HepG2 (cell line): ENCODE measurements at regions of chr1 and their contacts with region 1.

Region 1: GRCh38 chr1:235971571-235972310 is 93.1 kb downstream of the NID1 start:
- DNase-seq: peak; percentile 84
- ATAC-seq: peak; percentile 96
- H3K4me3 ChIP-seq: peak overlapping the region; percentile 46 to 78 (median 75)
- H3K27ac ChIP-seq: peak overlapping the region; percentile 42
- H3K4me1 ChIP-seq: peaks cover 7% of the 10 kb centered on the region
- H3K27me3 ChIP-seq: no peaks in the 10 kb centered on the region
- CTCF ChIP-seq: peak; percentile 94
- EP300 ChIP-seq: no peak
- POLR2A ChIP-seq: peak; percentile 41 to 53; a peak in 2 of 4 replicates
- RAD21 ChIP-seq: peak; percentile 79

Region 2: DNA sequence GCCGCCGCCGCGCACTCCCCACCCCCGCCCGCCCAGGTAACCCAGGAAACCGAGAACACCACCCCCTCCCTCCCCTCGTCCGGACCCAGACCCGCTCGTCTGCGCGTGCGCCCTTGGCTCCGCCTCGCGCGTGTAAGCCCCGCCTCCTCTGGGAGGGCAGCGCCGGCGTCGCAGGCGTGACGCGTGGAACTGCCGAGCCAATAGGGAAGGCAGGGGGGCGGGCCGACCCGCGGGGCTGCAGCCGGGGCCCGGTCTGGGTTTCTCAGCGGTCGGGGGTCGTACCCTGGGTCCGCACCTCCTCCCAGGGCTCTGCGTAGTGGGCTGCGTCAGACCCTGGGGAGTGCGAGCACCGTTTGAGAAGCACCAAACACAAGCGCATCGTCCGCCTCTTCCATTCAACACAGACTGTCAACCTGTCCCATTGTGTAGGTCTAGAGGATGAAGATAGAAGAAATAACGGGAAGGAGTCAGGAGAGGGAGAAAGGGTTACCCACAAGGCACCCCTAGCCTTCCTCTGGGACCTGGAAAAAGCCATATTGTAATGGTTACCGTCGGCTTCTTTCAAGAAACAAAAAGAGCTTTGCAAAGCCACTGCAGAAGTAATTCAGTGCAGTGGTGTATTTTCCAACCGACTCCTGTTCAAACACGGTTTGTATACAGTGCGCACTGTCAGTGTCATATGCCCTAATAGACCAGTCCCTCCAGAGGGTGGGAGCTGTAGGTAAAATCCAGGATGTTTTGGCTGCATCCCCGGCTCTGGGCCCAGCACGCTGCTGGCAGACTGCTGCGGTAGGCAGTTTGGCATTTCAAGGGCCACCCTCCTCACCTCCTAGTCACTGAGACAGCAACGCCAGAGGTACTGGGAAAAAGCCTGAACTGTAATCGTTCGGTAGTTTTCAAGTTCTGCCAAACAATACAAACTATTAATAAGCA is 104.6 kb before region 1 on chr1:
- CTCF ChIA-PET with region 1: interaction called, 19 read pairs
- POLR2A ChIA-PET with region 1: interaction called, 3 read pairs
- in situ Hi-C with region 1: loop called (anchors 10 kb)
- intact Hi-C with region 1: loop called (anchors 1 kb)
- DNase-seq: peak; percentile 82
- ATAC-seq: peak; percentile 86
- H3K4me3 ChIP-seq: peak overlapping the region; percentile 67 to 91 (median 83)
- H3K27ac ChIP-seq: peak overlapping the region; percentile 45
- H3K4me1 ChIP-seq: peaks cover 23% of the 10 kb centered on the region
- H3K27me3 ChIP-seq: no peaks in the 10 kb centered on the region
- CTCF ChIP-seq: no peak
- EP300 ChIP-seq: no peak
- POLR2A ChIP-seq: peak; percentile 49 to 92; a peak in 3 of 4 replicates
- RAD21 ChIP-seq: no peak

Region 3: DNA sequence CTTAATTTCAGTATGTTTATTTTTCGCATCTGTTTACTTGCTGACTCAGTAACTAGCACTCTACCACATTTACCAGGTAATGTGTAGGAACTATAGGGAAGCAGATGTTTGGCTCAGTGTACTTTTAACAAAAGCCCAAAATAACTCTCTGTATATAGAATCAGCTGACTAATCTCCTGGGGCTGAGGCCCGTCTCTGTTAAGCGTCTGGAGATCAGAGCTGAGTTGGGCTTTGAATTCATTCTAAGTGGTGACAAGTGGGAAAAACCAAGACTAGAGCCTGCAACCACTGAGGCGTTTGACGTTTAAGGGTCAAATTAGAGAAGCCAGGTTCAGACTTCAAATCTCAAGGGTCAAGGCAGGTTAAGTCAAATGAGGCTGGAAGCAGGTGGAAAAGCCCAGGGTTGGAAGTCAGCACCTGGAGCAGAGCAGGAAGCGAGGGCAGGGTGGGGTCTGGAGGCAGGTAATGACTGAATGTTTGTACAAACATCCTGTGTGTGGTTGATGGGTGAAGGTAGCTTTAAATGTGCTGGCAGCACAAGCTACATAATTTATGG is 48.2 kb before region 1 on chr1:
- CTCF ChIA-PET with region 1: no interaction called
- POLR2A ChIA-PET with region 1: no interaction called
- in situ Hi-C with region 1: no loop called
- intact Hi-C with region 1: no loop called
- DNase-seq: no peak
- ATAC-seq: no peak
- H3K4me3 ChIP-seq: no peak overlapping the region
- H3K27ac ChIP-seq: no peak overlapping the region
- H3K4me1 ChIP-seq: peaks cover 10% of the 10 kb centered on the region; the same call in 1 of the 2 replicates
- H3K27me3 ChIP-seq: peaks cover 2 to 13% of the 10 kb centered on the region in 2 experiments; a peak in 2 of 5 replicates
- CTCF ChIP-seq: no peak
- EP300 ChIP-seq: no peak
- POLR2A ChIP-seq: no peak
- RAD21 ChIP-seq: no peak

Region 4: GRCh38 chr1:235954306-235955283 is 17.1 kb before region 1 on chr1:
- CTCF ChIA-PET with region 1: no interaction called
- POLR2A ChIA-PET with region 1: no interaction called
- in situ Hi-C with region 1: no loop called
- intact Hi-C with region 1: loop called (anchors 1 kb)
- DNase-seq: peak; percentile 37
- ATAC-seq: peak; percentile 94
- H3K4me3 ChIP-seq: no peak overlapping the region; a peak in 1 of 6 replicates
- H3K27ac ChIP-seq: no peak overlapping the region
- H3K4me1 ChIP-seq: peaks cover 11% of the 10 kb centered on the region
- H3K27me3 ChIP-seq: no peaks in the 10 kb centered on the region; a peak in 1 of 5 replicates
- CTCF ChIP-seq: peak; percentile 64
- EP300 ChIP-seq: no peak
- POLR2A ChIP-seq: no peak
- RAD21 ChIP-seq: no peak